ENCODE measurements at regions of chr3 and their contacts with region 1.

Region 1: DNA sequence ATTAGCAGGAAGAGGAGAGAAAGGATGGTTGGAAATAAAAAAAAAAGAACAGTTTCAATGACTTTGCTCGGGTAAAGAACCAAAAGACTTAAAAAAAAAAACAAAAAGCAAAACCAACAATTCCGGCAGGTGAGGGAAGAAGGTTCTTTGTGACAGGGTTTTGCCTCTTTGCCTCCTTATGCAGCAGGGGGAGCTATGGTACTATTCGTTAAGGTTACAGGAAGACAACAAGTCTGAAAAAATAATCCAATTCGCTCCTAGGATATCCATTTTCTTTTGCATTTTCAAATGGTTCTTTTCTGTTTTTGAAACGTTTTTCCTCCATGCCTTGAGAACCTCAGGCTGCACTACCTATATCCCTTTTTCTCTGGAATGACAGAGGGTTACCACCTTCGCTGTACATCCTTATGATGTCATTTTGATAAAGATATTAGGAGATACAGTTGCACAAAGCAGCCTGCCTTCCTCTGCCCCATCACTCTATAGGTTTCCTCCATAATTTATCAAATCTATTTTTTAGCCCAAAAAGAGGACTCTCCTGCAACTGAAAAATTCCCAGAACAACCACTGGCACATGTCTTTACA is 55.0 kb downstream of the CFAP20DC start:
- DNase-seq: peak; percentile 69
- H3K4me3 ChIP-seq: peak overlapping the region in 1 of 3 experiments; percentile 4
- H3K27ac ChIP-seq: peak overlapping the region; percentile 60
- H3K4me1 ChIP-seq: peaks cover 40% of the 10 kb centered on the region
- H3K27me3 ChIP-seq: no peaks in the 10 kb centered on the region
- CTCF ChIP-seq: peak; percentile 83 to 89

Region 2: GRCh38 chr3:58366699-58367098 is 628.1 kb before region 1 on chr3:
- CTCF ChIA-PET with region 1: no interaction called
- dilution Hi-C with region 1: no loop called
- in situ Hi-C with region 1: no loop called
- intact Hi-C with region 1: no loop called
- DNase-seq: no peak
- H3K4me3 ChIP-seq: no peak overlapping the region
- H3K27ac ChIP-seq: no peak overlapping the region
- H3K4me1 ChIP-seq: no peaks in the 10 kb centered on the region
- H3K27me3 ChIP-seq: no peaks in the 10 kb centered on the region
- CTCF ChIP-seq: no peak

Region 3: DNA sequence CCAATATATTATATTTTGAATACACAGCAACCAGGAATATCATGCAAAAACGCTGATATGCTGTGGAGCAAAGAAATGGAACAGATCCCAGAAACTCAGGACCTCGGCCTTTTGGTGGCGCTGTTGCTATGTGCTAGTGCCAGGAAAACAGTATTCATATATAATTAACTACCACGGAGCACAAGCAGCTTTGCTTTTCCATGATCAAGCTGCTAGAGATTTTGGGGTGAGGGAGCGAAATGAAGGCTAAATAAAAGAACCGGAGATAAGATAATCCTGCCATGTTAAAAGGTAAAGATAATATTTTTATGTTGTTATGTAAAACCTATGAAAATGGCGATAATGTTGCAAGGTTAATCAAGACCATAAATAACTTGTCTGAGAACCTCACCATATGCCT is 170.6 kb before region 1 on chr3:
- CTCF ChIA-PET with region 1: interaction called, 8 read pairs
- dilution Hi-C with region 1: no loop called
- in situ Hi-C with region 1: loop called in 1 of 2 experiments (anchors 25 kb)
- intact Hi-C with region 1: loop called (anchors 2 kb)
- DNase-seq: peak; percentile 64
- H3K4me3 ChIP-seq: no peak overlapping the region
- H3K27ac ChIP-seq: no peak overlapping the region
- H3K4me1 ChIP-seq: peaks cover 5% of the 10 kb centered on the region
- H3K27me3 ChIP-seq: no peaks in the 10 kb centered on the region
- CTCF ChIP-seq: peak; percentile 85 to 86

Region 4: GRCh38 chr3:59043391-59043790 is 48.6 kb after region 1 on chr3:
- CTCF ChIA-PET with region 1: interaction called, 3 read pairs
- dilution Hi-C with region 1: no loop called
- in situ Hi-C with region 1: loop called in 1 of 2 experiments (anchors 5 kb)
- intact Hi-C with region 1: no loop called
- DNase-seq: no peak
- H3K4me3 ChIP-seq: no peak overlapping the region
- H3K27ac ChIP-seq: no peak overlapping the region
- H3K4me1 ChIP-seq: no peaks in the 10 kb centered on the region
- H3K27me3 ChIP-seq: no peaks in the 10 kb centered on the region
- CTCF ChIP-seq: no peak

Region 5: GRCh38 chr3:59185586-59186369 is 190.9 kb after region 1 on chr3:
- CTCF ChIA-PET with region 1: no interaction called
- dilution Hi-C with region 1: no loop called
- in situ Hi-C with region 1: no loop called
- intact Hi-C with region 1: loop called (anchors 5 kb)
- DNase-seq: peak; percentile 24
- H3K4me3 ChIP-seq: no peak overlapping the region
- H3K27ac ChIP-seq: no peak overlapping the region
- H3K4me1 ChIP-seq: peaks cover 8% of the 10 kb centered on the region
- H3K27me3 ChIP-seq: no peaks in the 10 kb centered on the region
- CTCF ChIP-seq: no peak

Region 6: GRCh38 chr3:59424268-59425010 is 429.6 kb after region 1 on chr3:
- CTCF ChIA-PET with region 1: no interaction called
- dilution Hi-C with region 1: no loop called
- in situ Hi-C with region 1: no loop called
- intact Hi-C with region 1: loop called (anchors 10 kb)
- DNase-seq: peak; percentile 92
- H3K4me3 ChIP-seq: no peak overlapping the region
- H3K27ac ChIP-seq: peak overlapping the region; percentile 59
- H3K4me1 ChIP-seq: peaks cover 40% of the 10 kb centered on the region
- H3K27me3 ChIP-seq: no peaks in the 10 kb centered on the region
- CTCF ChIP-seq: no peak

Region 7: DNA sequence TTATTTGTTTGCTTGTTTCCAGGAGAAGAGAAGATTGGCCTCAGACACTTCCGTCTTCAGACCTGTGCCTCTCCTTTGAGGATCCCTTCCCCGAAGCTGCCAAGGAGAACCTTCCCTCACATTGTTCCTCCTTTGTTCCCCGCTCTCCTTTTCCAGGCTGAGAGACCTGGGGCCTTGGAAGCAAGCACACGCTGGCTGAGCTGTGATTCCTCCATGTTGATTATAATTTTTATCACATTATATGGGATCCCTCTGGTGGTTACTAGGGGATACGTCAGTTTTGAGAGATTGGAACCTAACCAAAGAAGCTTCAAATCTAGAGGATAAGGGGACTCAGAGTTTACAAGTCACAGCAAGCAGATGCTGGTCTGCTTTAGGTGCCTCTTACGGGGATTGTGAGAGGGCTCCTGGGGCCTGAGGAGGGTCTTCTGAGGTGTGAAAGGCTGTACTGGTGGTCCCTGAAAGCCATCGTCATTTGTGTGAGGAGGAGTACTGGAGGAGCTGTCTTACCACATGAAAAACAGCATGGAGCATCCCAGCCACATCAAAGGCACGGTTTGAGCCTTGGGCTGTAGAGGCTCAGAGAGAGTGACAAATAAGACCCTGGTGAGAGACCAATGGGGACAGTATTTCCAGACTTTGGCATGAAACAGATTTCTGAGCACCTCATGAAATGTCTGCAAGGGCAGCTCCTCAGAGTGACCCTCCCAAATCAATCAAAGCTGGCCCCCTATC is 815.0 kb after region 1 on chr3:
- CTCF ChIA-PET with region 1: interaction called, 7 read pairs
- dilution Hi-C with region 1: no loop called
- in situ Hi-C with region 1: loop called (anchors 25 kb)
- intact Hi-C with region 1: loop called (anchors 5 kb)
- DNase-seq: peak; percentile 34
- H3K4me3 ChIP-seq: no peak overlapping the region
- H3K27ac ChIP-seq: no peak overlapping the region
- H3K4me1 ChIP-seq: no peaks in the 10 kb centered on the region
- H3K27me3 ChIP-seq: no peaks in the 10 kb centered on the region
- CTCF ChIP-seq: peak; percentile 33 to 69

Measured in mammary epithelial cell (primary cell).